GM18951 (cell line): ENCODE measurements at regions of chr2 and their contacts with region 1.

Region 1: GRCh38 chr2:46010925-46011490 is 286.2 kb upstream of the EPAS1 start:
- POLR2A ChIP-seq: no peak

Region 2: DNA sequence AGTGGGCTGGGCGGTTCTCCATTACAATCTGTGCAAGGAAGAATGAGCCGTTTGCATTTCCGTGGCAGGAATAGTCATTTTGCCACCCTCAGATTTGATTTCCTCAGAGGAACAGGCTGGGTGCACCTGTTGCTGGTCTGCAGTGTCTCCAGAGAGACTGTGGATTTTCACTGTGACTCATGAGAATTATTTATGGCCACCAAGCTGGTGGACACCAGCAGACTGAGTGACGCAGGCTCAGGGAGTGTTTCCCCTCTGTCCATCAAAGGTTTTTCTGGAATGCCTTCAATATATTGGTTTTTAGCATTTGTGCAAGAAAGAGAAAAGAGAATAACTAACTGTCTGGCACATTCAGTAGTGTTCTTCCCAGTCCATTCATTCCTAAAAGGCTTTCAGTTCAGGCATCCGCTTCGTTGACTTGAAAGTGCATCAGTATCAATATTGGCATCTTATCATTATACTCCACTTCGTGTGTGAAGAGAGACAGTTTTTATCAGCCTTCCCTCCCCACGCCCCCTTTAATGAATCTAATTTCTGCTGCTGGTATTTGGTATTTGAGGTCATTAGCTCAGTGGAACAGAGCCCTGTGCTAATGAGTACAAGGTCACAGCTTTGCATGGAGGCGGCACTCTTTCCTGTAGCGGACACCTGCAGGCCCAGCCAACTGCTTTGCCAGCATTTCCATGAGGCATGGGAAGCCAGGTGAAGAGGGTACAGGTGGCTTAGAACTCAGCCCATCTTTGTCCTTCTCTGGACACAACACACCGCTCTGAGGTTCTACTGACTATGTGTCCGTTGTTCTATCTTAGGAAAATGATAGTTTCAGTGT is 319.6 kb before region 1 on chr2:
- in situ Hi-C with region 1: no loop called
- POLR2A ChIP-seq: no peak

Region 3: DNA sequence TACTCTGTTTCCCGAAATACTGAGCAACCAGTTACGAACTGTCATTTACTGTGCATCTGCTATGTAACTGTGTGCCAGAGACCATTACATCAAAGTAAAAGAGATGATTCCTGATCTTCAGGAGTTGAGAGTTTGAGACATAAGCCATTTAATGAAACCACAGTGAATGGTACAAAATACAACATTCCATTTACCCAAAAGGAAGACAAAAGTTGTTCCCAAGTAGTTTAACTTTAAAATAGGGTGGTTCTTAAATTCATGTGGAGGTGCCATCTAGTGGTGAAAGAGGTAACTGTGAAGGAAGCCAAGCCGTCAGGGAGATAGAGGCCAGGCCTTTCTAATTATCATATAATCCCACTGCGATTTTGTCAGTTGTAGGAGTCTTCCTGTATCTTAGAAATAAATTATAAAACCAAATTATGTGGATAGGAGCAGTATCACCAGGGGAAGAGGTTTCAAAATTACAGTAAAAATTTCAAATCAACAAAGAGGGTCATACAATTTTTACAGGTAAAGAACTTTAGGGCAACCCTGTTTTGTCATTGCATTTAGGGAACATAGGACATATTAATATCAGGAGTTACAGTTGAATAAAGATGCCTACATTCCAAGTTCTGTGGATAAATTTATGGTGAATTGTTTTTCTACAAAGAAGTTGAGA is 353.9 kb after region 1 on chr2:
- in situ Hi-C with region 1: loop called (anchors 25 kb)
- POLR2A ChIP-seq: no peak

Region 4: DNA sequence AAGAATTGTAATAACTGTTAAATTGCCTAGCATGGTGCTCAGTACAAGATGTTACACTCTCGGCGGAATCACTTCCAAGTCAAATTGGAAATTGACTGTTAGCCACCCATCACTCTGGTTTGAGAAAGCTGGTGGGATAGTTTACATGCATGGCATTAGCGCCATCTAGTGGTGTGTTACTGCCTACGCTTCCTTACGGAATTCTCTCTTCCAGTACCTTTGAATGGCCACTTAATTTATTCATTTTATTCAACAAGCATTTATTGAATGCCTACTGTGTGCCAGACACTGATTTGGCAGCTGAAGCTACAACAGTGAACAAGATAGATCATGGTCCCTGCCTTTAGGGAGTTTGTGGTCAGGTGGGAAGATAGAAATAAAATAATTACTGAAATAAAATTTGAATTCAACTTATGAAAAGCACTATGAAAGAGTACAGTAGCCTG is 639.6 kb after region 1 on chr2:
- in situ Hi-C with region 1: loop called (anchors 25 kb)
- POLR2A ChIP-seq: no peak